ENCODE measurements at regions of chr2 and their contacts with region 1.

Region 1: DNA sequence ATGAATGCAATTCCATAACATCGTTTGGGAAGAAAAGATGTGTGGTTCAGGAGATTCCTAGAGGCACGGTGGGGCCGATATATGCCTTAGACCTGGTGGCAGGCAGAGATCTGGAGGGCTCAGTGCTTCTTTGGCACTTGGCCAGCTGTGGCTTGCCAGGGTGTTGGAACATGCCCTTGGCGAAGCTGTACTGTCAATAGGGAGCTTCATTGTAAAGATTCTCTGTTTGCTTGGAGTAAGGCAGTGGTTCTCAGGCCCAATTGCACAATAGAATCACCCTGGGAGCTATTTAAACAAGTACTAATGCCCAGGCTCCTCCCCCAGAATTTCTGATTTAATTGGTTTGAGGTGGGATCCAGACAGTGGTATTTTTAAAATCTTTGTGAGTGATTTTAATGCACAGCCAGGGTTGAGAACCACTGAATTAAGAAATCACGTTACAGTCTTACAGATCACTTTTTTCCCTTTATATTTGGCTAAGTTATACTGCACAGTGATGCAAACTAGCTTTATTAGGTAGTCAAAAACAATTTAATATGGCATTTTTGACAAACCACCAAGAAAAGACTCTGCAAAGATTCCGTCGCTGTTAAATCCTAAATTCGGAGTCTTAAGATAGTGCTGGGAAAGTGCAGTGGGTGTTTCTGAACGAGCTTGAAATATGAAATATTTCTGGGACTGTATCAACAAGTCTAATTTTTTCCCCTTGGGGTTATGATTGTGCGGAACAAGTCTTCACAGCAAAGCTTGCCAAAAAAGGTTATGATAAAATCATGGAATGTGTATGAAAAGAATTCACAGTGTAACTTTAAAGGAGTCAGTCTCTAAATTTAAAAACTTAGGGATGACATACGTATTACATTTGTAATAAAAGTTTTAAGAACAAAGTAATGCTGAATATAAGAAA is 78.0 kb downstream of the CRIM1 start:
- DNase-seq: peak; percentile 75
- H3K4me3 ChIP-seq: peak overlapping the region in 1 of 4 donors; percentile 20
- H3K27ac ChIP-seq: peak overlapping the region; percentile 48 to 86 (median 80)
- H3K4me1 ChIP-seq: peaks cover 0 to 71% (median 57%) of the 10 kb centered on the region in 4 donors
- H3K27me3 ChIP-seq: no peaks in the 10 kb centered on the region
- CTCF ChIP-seq: no peak
- EP300 ChIP-seq: no peak
- POLR2A ChIP-seq: no peak

Region 2: GRCh38 chr2:36246320-36246990 is 187.1 kb before region 1 on chr2:
- intact Hi-C with region 1: no loop called
- DNase-seq: no peak
- H3K4me3 ChIP-seq: no peak overlapping the region
- H3K27ac ChIP-seq: no peak overlapping the region
- H3K4me1 ChIP-seq: no peaks in the 10 kb centered on the region
- H3K27me3 ChIP-seq: no peaks in the 10 kb centered on the region
- CTCF ChIP-seq: no peak
- EP300 ChIP-seq: no peak
- POLR2A ChIP-seq: no peak

Region 3: DNA sequence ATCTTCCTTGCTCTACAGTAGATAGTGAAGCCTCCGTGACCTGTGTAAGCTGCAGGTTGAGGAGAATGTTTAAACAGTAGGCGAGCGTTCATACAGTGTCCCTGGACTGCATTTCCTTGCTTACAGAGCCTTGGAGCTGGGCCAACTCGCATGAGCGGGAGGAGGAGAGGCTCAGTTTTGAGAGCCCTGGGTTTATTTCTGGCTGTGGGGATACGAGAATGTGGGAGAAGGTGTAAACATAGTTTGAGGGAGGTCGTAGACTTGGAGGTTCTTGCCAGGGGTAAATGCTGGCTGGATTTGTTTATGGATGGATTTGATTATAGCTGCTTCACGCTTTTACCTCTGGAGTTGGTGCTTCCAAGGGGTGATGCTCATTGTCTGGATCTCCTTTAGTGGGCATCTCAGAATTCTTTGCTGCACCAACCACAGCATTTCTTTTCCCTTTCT is 57.2 kb before region 1 on chr2:
- intact Hi-C with region 1: loop called (anchors 5 kb)
- DNase-seq: peak; percentile 92
- H3K4me3 ChIP-seq: no peak overlapping the region
- H3K27ac ChIP-seq: peak overlapping the region in 3 of 4 donors; percentile 6 to 95 (median 63)
- H3K4me1 ChIP-seq: peaks cover 0 to 89% (median 79%) of the 10 kb centered on the region in 4 donors
- H3K27me3 ChIP-seq: no peaks in the 10 kb centered on the region
- CTCF ChIP-seq: no peak
- EP300 ChIP-seq: no peak
- POLR2A ChIP-seq: no peak

Region 4: GRCh38 chr2:36397728-36398413 is 35.7 kb before region 1 on chr2:
- intact Hi-C with region 1: loop called (anchors 5 kb)
- DNase-seq: no peak
- H3K4me3 ChIP-seq: no peak overlapping the region
- H3K27ac ChIP-seq: no peak overlapping the region
- H3K4me1 ChIP-seq: peaks cover 0 to 54% (median 30%) of the 10 kb centered on the region in 4 donors
- H3K27me3 ChIP-seq: no peaks in the 10 kb centered on the region
- CTCF ChIP-seq: no peak
- EP300 ChIP-seq: no peak
- POLR2A ChIP-seq: no peak

Region 5: GRCh38 chr2:36597003-36597531 is 163.5 kb after region 1 on chr2:
- intact Hi-C with region 1: no loop called
- DNase-seq: no peak
- H3K4me3 ChIP-seq: peak overlapping the region; percentile 92 to 100 (median 98)
- H3K27ac ChIP-seq: peak overlapping the region; percentile 97 to 100 (median 98)
- H3K4me1 ChIP-seq: peaks cover 0 to 36% (median 27%) of the 10 kb centered on the region in 4 donors
- H3K27me3 ChIP-seq: no peaks in the 10 kb centered on the region
- CTCF ChIP-seq: no peak
- EP300 ChIP-seq: no peak
- POLR2A ChIP-seq: no peak

Region 6: GRCh38 chr2:36633470-36634092 is 200.0 kb after region 1 on chr2:
- intact Hi-C with region 1: no loop called
- DNase-seq: no peak
- H3K4me3 ChIP-seq: no peak overlapping the region
- H3K27ac ChIP-seq: no peak overlapping the region
- H3K4me1 ChIP-seq: peaks cover 0 to 18% (median 13%) of the 10 kb centered on the region in 4 donors
- H3K27me3 ChIP-seq: no peaks in the 10 kb centered on the region
- CTCF ChIP-seq: no peak
- EP300 ChIP-seq: no peak
- POLR2A ChIP-seq: no peak

Measured in sigmoid colon (tissue), 7 donors.